Activated T-helper 1 cell treated with anti-CD3 and anti-CD28 coated beads, Interleukin-12 subunit alpha, Interleukin-12 subunit beta, Interleukin-2, Interleukin-4 antibody, amounts not matched to agents 30 ng/mL and 10 ng/mL and 1 ng/mL, durations not matched to agents 14 hours and 24 hours and 36 hours (primary cell): ENCODE measurements at regions of chr9 and their contacts with region 1.

Region 1: DNA sequence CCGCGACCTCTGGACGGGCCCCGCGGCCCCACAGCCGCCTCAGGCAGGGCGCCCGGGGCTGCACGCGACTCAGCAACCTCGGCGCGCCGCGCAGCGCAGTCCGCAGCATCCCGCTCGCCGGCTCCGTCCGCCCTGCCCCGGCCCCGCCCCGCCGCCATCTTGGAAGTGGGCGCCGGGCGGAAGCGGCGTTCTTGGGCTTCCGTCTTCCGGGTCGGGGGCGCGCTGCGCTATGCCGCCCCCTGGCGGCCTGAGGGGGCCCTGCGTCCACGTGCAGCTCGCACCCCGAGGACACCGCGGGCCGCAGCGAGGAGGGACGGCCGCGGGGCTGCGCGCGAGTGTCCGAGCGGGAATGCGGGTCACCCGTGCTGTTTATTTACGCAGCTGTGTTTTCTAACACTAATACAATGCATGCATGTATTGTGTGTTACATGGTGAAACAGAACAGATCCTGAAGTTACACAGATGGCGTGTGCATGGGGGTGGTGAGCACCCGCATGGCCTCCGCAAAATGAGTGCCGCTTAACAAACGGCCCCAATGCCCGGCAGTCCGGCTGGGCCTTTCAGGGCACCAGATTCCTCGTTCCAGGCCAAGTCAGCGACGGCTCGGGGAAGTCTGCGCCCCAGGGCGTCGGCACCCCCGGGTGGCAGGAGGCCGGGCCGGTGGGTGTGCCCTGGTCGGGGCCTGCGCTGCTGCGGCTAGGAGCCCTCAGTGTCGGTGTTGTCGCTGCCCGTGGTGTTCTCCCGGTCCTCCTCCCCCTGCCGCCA is at the start of gene DNLZ:
- DNase-seq: peak; percentile 83
- H3K4me3 Mint-ChIP-seq: peak within 1 kb of the TSS; percentile 83
- H3K27ac Mint-ChIP-seq: peak within 1 kb of the TSS; percentile 79
- H3K4me1 Mint-ChIP-seq: peaks cover 6% of the 10 kb centered on the region
- H3K27me3 Mint-ChIP-seq: no peaks in the 10 kb centered on the region
- total RNA-seq, gene DNLZ: 35.2 TPM in 2 replicates

Region 2: GRCh38 chr9:135990468-135991429 is 373.0 kb before region 1 on chr9:
- intact Hi-C with region 1: loop called (anchors 1 kb)
- DNase-seq: no peak
- H3K4me3 Mint-ChIP-seq: no peak overlapping the region
- H3K27ac Mint-ChIP-seq: peak overlapping the region; percentile 29
- H3K4me1 Mint-ChIP-seq: no peaks in the 10 kb centered on the region
- H3K27me3 Mint-ChIP-seq: no peaks in the 10 kb centered on the region

Region 3: GRCh38 chr9:136267261-136268111 is 96.3 kb before region 1 on chr9:
- intact Hi-C with region 1: loop called (anchors 1 kb)
- DNase-seq: peak; percentile 81
- H3K4me3 Mint-ChIP-seq: peak overlapping the region; percentile 83
- H3K27ac Mint-ChIP-seq: peak overlapping the region; percentile 70
- H3K4me1 Mint-ChIP-seq: peaks cover 6% of the 10 kb centered on the region
- H3K27me3 Mint-ChIP-seq: peaks cover 7% of the 10 kb centered on the region

Region 4: GRCh38 chr9:136342181-136343120 is 21.3 kb before region 1 on chr9:
- intact Hi-C with region 1: loop called (anchors 1 kb)
- DNase-seq: peak; percentile 58
- H3K4me3 Mint-ChIP-seq: no peak overlapping the region
- H3K27ac Mint-ChIP-seq: no peak overlapping the region
- H3K4me1 Mint-ChIP-seq: no peaks in the 10 kb centered on the region
- H3K27me3 Mint-ChIP-seq: no peaks in the 10 kb centered on the region

Region 5: DNA sequence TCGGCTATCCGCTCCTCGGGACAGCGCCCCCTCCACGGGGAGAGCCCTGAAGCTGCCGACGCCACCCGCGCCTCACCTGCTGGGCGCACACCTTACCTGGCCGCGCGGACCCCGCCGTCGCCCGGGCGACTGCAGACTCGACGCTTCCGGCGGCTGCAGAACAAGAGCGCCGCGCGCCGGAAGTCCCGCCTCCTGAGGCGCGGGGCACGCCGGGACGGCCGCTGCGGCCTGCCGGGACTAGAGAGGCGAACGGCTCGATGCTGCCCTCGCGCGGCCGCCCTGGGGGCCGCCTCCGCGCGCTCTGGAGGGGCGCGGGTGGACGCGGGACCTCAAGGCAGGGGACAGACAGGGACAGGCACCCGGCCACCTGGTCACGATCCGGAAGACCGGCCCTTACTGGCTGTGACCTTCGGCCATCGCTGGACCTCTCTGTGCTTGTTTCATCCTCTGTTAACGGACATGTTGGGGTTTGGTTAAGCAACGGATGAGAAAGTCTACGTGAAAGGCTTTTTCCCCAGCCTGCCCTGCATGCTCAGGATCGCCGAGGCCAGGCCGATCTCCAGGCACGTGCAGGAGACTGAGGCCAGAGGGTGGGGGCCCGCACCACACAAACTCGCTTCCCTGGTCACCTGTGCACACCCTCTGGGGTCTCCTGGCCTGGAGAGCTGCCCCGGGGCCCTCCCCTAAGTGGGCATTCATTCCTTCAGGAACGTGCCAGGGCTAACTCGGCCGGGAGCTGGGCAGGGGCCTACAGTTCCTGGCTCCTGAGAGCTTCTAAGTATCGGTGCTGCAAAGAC is 36.4 kb after region 1 on chr9 and contains the start of gene SNAPC4:
- intact Hi-C with region 1: loop called (anchors 1 kb)
- DNase-seq: peak; percentile 86
- H3K4me3 Mint-ChIP-seq: peak within 1 kb of the TSS; percentile 91
- H3K27ac Mint-ChIP-seq: peak within 1 kb of the TSS; percentile 76
- H3K4me1 Mint-ChIP-seq: peaks cover 40% of the 10 kb centered on the region
- H3K27me3 Mint-ChIP-seq: no peaks in the 10 kb centered on the region
- total RNA-seq, gene SNAPC4: 26.7 TPM in 2 replicates

Region 6: DNA sequence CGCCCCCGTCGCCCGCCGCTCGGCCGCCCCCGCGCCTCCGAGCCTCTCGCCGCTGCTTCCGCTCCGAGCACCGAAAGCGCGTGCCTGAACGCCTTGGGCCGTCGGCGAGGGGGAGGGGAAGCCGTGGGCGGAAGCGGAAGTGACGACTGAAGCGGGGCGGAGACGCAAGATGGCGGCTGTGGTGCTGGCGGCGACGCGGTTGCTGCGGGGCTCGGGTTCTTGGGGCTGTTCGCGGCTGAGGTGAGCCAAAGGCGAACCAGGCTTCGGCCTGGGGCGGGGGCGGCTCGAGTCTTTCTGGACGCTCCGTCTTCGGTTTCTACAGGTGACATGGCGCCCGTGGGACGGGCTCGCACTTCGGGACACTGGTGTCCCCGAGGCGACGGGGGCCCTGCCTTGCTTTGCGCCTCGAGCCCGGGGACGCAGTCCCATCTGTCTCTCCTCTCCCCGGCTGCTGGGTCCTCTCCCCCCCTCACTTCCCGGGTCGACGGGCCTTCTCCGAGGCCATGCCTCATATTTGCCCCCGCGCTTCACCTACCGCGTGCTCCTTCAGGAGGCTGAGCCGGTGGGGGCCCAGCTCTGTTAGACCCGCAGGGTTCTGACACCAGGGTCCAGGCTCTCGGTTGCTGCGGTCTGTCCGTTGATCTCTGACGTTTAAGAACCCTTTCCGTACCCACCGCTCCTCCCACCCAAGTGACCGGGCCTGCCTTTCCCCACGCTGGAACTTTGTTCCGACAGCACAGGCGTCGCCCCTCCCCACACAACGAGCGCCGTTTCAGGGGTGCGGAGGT is 46.9 kb after region 1 on chr9 and contains the starts of genes ENTR1 and PMPCA:
- intact Hi-C with region 1: loop called (anchors 1 kb)
- DNase-seq: peak; percentile 93
- H3K4me3 Mint-ChIP-seq: peak within 1 kb of the TSS; percentile 97
- H3K27ac Mint-ChIP-seq: peak within 1 kb of the TSS; percentile 94
- H3K4me1 Mint-ChIP-seq: peaks cover 35% of the 10 kb centered on the region
- H3K27me3 Mint-ChIP-seq: peaks cover 3% of the 10 kb centered on the region
- total RNA-seq, gene ENTR1: 50.0 and 54.5 TPM in 2 replicates
- total RNA-seq, gene PMPCA: 104 and 114 TPM in 2 replicates

Region 7: GRCh38 chr9:136439550-136440408 is 76.0 kb after region 1 on chr9 and contains the start of gene INPP5E:
- intact Hi-C with region 1: loop called (anchors 1 kb)
- DNase-seq: peak; percentile 84
- H3K4me3 Mint-ChIP-seq: peak within 1 kb of the TSS; percentile 88
- H3K27ac Mint-ChIP-seq: peak within 1 kb of the TSS; percentile 23
- H3K4me1 Mint-ChIP-seq: peaks cover 18% of the 10 kb centered on the region
- H3K27me3 Mint-ChIP-seq: no peaks in the 10 kb centered on the region
- total RNA-seq, gene INPP5E: 19.7 and 20.0 TPM in 2 replicates